ENCODE measurements at regions of chr17 and their contacts with region 1.

Region 1: DNA sequence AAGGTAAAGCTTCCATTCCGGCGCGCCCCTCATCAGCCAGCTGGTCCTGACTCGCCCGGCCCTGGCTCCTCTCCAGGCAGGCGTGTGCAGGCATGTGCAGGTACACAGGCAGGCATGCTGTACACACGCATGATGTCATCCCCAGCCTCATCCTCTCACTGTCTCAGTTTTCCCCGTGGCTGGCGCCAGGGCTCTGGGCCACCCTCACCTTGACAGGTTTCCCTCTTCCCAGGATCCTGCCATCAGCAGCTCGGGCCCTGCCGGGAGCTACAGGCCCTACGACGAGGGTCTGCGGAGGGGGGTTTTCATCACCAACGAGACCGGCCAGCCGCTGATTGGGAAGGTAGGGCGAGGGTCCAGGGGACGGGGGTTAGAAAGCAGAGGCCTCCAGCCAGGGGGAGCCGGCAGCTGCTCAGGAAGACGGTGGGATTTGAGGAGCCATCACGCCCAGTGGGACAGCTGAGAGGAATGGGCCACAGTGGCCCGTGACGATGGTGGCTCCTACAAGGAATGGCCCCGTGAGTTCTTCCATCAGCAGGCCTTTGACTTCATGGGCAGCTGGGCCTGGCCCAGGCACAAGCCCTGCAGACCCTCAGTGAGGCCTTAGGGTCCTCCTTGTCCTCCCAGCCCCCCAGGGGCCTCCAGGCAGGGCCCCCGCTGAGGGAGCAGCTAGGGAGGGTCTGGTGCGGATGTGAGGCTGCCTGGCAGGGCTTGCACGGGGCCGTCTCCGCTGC is 8.5 kb downstream of the GAA start:
- DNase-seq: peak; percentile 92
- H3K4me3 ChIP-seq: no peak overlapping the region
- H3K27ac ChIP-seq: no peak overlapping the region
- H3K4me1 ChIP-seq: peaks cover 17% of the 10 kb centered on the region
- H3K27me3 ChIP-seq: no peaks in the 10 kb centered on the region
- CTCF ChIP-seq: no peak

Region 2: GRCh38 chr17:80124351-80124981 is 14.6 kb after region 1 on chr17:
- CTCF ChIA-PET with region 1: no interaction called
- dilution Hi-C with region 1: no loop called
- in situ Hi-C with region 1: no loop called
- intact Hi-C with region 1: loop called (anchors 2 kb)
- DNase-seq: peak; percentile 76
- H3K4me3 ChIP-seq: no peak overlapping the region
- H3K27ac ChIP-seq: peak overlapping the region; percentile 16
- H3K4me1 ChIP-seq: peaks cover 26% of the 10 kb centered on the region
- H3K27me3 ChIP-seq: no peaks in the 10 kb centered on the region
- CTCF ChIP-seq: peak; percentile 33 to 56

Region 3: DNA sequence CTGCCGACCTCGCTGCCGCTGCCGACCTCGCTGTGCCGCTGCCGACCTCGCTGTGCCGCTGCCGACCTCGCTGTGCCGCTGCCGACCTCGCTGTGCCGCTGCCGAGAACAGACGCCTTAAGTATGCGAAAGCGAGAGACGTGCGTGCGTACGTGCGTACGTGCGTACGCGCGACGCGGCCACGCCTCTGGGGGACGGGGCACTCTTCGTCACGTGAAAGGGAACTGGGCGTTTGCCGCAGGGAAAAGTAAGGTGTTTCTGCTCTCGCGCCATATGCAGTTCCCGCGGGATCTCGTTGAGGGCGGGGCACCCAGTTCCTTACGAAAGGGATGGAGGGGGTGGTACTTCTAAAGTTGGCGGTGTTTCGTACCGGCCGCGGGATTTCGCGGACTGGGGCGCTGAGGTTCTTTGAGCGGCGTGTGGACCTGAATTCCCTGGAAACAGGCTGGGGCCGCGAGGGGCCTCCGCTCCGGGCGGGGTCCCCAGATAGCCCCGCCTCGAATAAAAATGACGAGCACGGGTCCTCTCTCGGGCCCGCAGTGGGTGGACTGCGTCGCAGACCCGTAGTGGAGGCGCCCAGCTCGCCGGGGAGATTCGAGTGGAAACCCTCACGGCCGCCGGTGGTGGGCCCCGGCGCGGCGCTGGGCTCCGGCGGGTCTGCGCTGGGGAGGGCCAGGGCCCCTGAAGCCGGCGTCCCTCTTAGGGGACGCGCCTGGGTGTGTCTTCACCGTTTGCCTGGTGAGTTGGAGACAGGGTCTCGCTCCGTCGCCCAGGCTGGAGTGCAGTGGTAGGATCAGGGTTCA is 37.4 kb after region 1 on chr17 and contains the start of gene EIF4A3:
- CTCF ChIA-PET with region 1: no interaction called
- dilution Hi-C with region 1: loop called (anchors 5 kb)
- in situ Hi-C with region 1: no loop called
- intact Hi-C with region 1: loop called (anchors 2 kb)
- DNase-seq: peak; percentile 98
- H3K4me3 ChIP-seq: peak within 1 kb of the TSS; percentile 78 to 96 (median 82)
- H3K27ac ChIP-seq: peak within 1 kb of the TSS; percentile 81
- H3K4me1 ChIP-seq: peaks cover 14% of the 10 kb centered on the region
- H3K27me3 ChIP-seq: no peaks in the 10 kb centered on the region
- CTCF ChIP-seq: peak in 1 of 2 donors; percentile 6
- total RNA-seq, gene EIF4A3: 79.7 to 86.4 TPM